WTC11 (cell line): ENCODE measurements at regions of chr10 and their contacts with region 1.

Region 1: GRCh38 chr10:71696628-71697326 is 22.8 kb downstream of the C10orf105 start:
- DNase-seq: peak; percentile 91
- ATAC-seq: peak; percentile 97
- H3K4me3 Mint-ChIP-seq: no peak overlapping the region
- H3K27ac Mint-ChIP-seq: no peak overlapping the region
- H3K4me1 Mint-ChIP-seq: no peaks in the 10 kb centered on the region
- H3K27me3 Mint-ChIP-seq: no peaks in the 10 kb centered on the region; the same call in 1 of the 2 replicates
- CTCF ChIP-seq: peak; percentile 83

Region 2: GRCh38 chr10:71383972-71384687 is 312.6 kb before region 1 on chr10:
- CTCF ChIA-PET with region 1: interaction called, 18 read pairs
- POLR2A ChIA-PET with region 1: no interaction called
- DNase-seq: peak; percentile 93
- ATAC-seq: peak; percentile 97
- H3K4me3 Mint-ChIP-seq: no peak overlapping the region
- H3K27ac Mint-ChIP-seq: no peak overlapping the region
- H3K4me1 Mint-ChIP-seq: no peaks in the 10 kb centered on the region
- H3K27me3 Mint-ChIP-seq: no peaks in the 10 kb centered on the region
- CTCF ChIP-seq: peak; percentile 96

Region 3: DNA sequence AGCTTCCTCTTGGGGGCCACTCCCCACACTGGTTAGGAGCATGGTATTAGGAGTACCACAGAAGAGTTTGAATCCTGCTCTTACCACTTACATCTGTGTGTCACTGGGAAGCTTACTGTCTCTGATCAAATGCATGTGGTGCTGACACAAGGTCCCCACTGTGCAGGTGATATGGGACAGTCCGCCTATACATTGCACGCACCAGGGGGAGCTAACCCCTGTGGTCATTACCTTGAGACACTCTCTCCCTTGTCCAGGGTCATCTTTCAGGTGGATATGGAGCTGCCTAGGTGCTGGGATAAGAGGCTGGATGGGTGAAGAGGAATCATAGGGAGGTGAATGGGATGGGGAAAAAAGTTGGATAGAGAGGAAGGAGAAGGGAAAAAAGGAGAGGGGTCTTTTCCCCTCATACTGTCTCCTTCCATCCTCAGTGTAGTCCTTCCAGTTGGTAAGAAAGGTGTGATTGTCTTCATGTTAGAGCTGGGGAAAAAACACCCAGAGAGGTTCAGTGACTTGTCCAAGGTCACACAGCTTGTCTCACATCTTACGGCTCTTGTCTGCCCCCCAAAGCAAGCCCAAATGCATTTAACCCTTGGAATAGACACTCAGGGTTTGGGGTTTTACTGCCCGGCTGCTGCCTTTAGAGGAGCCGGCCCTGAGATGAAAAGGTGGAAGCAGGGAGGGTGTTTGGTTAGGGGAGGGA is 174.2 kb before region 1 on chr10:
- CTCF ChIA-PET with region 1: interaction called, 11 read pairs
- POLR2A ChIA-PET with region 1: no interaction called
- DNase-seq: no peak
- ATAC-seq: peak; percentile 71
- H3K4me3 Mint-ChIP-seq: no peak overlapping the region
- H3K27ac Mint-ChIP-seq: no peak overlapping the region
- H3K4me1 Mint-ChIP-seq: peaks cover 6% of the 10 kb centered on the region; the same call in 1 of the 2 replicates
- H3K27me3 Mint-ChIP-seq: no peaks in the 10 kb centered on the region
- CTCF ChIP-seq: no peak

Region 4: DNA sequence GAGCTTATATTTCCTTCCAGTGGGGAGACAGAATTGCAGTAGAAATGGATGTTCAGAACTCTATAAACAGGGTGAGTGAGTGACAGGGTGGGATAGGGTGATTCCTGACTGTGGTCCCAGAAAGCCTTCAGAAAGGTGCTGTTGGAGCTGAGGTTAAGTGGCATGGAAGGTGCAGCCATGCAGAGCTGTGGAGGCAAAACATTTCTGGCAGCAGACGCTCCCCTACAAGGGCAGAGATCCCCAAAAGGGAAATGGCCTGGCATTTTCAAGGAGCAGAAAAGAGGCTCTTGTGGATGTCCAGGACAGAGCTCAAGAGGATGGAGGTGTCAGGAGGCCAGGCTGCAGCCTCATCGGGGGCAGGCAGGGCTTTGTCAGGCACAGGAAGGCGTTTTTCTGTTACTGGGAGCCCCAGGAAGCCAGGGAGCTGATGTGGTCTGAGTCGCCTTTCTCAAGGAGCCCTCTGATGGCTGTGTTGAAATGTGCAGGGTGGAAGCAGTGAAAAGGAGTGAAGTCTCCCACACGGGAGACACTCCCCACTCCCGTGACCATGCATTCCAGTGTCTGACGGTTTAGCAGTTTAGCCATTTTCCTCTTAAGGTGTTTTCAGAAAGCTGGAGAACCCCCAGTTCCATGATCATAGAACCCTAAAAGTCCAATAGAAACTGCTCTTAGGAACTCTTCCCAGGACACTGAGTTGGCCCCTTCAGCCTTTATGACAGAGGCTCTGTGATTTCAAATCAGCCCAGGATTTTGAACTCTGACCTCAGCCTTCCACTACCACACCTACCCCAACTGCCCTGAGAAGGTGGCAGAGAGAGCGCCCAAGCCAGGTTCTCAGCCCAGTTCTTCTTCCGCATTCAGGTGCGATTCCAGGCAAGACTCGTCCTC is 73.4 kb before region 1 on chr10:
- CTCF ChIA-PET with region 1: interaction called, 58 read pairs
- POLR2A ChIA-PET with region 1: interaction called, 3 read pairs
- DNase-seq: peak; percentile 45
- ATAC-seq: peak; percentile 40
- H3K4me3 Mint-ChIP-seq: peak overlapping the region; percentile 58
- H3K27ac Mint-ChIP-seq: peak overlapping the region; percentile 67
- H3K4me1 Mint-ChIP-seq: peaks cover 71% of the 10 kb centered on the region
- H3K27me3 Mint-ChIP-seq: peaks cover 1% of the 10 kb centered on the region
- CTCF ChIP-seq: no peak

Region 5: DNA sequence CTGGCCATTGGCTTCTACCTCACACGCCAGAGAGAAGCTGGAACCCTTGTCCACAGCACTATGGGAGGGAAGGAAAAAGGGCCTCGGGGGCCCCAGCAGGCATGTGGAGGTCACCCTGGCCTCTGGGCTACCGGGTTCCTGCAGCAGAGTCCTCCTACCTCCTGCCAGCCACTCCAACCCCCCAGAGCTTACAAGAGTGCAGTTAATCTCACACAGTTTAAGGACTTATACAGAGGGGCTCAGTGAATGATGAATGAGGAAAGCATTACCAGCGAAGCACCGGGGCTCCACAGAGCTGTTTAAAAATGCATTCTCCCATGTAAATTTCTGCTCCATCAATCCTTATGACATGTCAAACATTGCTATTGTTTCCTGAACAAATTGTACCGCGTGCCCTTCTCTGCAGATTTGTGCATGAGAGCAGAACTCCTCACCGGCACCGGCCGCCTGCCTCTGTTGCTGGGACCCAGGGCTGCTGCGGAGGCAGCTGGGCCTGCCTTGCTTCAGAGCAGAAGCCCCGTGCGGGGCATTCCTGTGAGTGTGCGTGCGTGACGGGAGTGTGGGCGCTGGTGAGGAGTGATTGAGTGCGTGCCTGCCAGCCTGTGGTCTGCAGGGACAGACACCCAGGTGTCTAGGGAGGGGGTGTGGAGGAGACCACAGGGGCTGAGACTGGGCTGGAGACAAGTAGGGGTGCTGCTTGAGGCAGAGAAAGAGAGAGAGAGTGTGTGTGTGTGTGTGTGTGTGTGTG is 30.0 kb before region 1 on chr10:
- CTCF ChIA-PET with region 1: interaction called, 59 read pairs
- POLR2A ChIA-PET with region 1: interaction called, 3 read pairs
- DNase-seq: no peak
- ATAC-seq: no peak
- H3K4me3 Mint-ChIP-seq: no peak overlapping the region
- H3K27ac Mint-ChIP-seq: no peak overlapping the region
- H3K4me1 Mint-ChIP-seq: peaks cover 37% of the 10 kb centered on the region
- H3K27me3 Mint-ChIP-seq: peaks cover 14% of the 10 kb centered on the region; the same call in 1 of the 2 replicates
- CTCF ChIP-seq: no peak

Region 6: DNA sequence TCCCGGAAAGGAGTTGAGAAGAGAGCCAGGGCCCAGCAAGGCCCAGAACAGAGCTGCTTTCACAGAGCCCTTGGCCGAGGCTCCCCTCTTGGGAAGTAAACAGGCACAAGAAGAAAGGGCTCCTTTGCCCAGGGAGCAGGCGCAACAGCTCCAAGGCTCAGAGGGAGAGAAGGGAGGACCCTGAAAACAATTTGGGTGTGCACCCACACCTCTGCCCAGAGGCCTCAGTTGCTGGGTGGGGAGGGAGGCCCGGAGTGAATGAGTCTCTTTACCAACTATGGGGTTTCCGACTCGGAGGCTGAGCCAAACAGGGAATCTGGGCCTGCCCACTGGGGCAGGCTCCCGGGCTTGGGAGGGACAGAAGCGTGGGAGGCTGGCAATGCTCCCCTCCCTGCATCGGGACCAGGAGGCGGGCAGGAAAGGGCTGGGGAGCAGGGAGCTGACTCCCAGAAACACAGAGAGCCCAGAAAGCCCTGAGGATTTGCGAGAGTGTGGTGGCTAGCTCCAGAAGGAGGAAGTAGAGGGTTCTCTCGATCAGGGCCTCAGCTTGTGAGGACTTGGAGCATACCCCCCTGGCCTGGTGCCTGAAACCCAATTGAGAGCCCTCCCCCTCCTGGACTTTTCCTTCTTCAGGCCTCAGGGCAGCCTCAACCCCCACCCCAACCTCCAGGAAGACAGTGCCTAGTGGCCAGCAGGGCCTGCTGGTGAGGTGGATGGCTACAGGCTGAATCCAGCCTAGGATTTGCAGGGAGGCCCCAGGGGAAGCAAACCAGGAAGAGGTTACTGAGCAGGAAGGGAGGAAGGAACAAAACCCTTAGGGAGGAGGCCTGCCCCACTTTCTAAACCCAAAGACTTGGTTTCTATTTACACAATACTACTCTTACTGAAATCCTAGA is 16.6 kb after region 1 on chr10:
- CTCF ChIA-PET with region 1: interaction called, 158 read pairs
- POLR2A ChIA-PET with region 1: no interaction called
- DNase-seq: no peak
- ATAC-seq: peak; percentile 59
- H3K4me3 Mint-ChIP-seq: no peak overlapping the region
- H3K27ac Mint-ChIP-seq: peak overlapping the region; percentile 49
- H3K4me1 Mint-ChIP-seq: peaks cover 11% of the 10 kb centered on the region
- H3K27me3 Mint-ChIP-seq: no peaks in the 10 kb centered on the region; the same call in 1 of the 2 replicates
- CTCF ChIP-seq: no peak

Region 7: DNA sequence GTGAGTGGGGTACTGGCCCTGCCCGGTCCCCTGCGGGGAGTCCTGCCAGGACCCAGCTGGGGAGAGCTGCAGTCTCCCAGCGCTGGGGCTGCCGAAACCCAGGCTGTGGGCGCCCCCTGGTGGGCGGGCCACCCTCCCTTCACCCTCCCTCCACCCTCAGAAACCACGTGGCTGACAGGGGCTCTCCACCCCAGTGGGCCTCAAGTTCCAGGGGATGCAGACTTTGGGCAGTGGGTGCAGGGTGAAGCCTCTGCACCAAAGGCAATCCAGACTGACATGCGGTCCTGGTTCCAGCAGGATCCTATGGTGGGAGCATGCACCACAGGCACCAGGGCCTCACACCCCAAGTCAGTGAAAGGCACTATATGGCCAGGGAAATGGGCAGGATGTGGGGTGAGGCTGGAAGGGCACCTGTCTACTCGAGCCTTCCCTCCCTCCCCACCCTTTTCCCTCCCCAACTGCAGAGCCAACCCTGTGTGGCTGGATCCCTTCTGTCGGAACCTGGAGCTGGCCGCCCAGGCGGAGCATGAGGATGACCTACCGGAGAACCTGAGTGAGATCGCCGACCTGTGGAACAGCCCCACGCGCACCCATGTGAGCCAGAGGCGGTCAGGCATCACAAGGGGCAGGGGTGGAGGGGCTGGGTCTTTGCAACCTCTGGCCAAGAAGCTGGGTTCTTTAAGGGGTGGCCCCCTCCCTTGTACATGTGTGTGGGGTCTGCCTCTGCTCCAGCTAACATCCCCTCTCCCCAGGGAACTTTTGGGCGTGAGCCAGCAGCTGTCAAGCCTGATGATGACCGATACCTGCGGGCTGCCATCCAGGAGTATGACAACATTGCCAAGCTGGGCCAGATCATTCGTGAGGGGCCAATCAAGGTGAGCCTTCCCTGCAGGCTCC is 115.5 kb after region 1 on chr10:
- CTCF ChIA-PET with region 1: interaction called, 24 read pairs
- POLR2A ChIA-PET with region 1: no interaction called
- DNase-seq: peak; percentile 74
- ATAC-seq: peak; percentile 76
- H3K4me3 Mint-ChIP-seq: no peak overlapping the region
- H3K27ac Mint-ChIP-seq: no peak overlapping the region
- H3K4me1 Mint-ChIP-seq: no peaks in the 10 kb centered on the region
- H3K27me3 Mint-ChIP-seq: no peaks in the 10 kb centered on the region
- CTCF ChIP-seq: peak; percentile 53

Region 8: GRCh38 chr10:71921324-71922027 is 224.7 kb after region 1 on chr10:
- CTCF ChIA-PET with region 1: no interaction called
- POLR2A ChIA-PET with region 1: no interaction called
- DNase-seq: no peak
- ATAC-seq: no peak
- H3K4me3 Mint-ChIP-seq: no peak overlapping the region
- H3K27ac Mint-ChIP-seq: no peak overlapping the region
- H3K4me1 Mint-ChIP-seq: peaks cover 4% of the 10 kb centered on the region; the same call in 1 of the 2 replicates
- H3K27me3 Mint-ChIP-seq: no peaks in the 10 kb centered on the region
- CTCF ChIP-seq: no peak